OCI-LY7 (cell line): ENCODE measurements at regions of chr16 and their contacts with region 1.

Region 1: GRCh38 chr16:87702325-87702811 is 63.4 kb downstream of the KLHDC4 start:
- DNase-seq: peak; percentile 93
- H3K4me3 ChIP-seq: peak overlapping the region; percentile 36
- H3K27ac ChIP-seq: peak overlapping the region; percentile 99
- H3K4me1 ChIP-seq: peaks cover 68% of the 10 kb centered on the region
- CTCF ChIP-seq: peak; percentile 83

Region 2: GRCh38 chr16:87447323-87447722 is 255.0 kb before region 1 on chr16:
- CTCF ChIA-PET with region 1: no interaction called
- POLR2A ChIA-PET with region 1: no interaction called
- intact Hi-C with region 1: no loop called
- DNase-seq: no peak
- H3K4me3 ChIP-seq: no peak overlapping the region
- H3K27ac ChIP-seq: no peak overlapping the region
- H3K4me1 ChIP-seq: no peaks in the 10 kb centered on the region
- CTCF ChIP-seq: no peak

Region 3: DNA sequence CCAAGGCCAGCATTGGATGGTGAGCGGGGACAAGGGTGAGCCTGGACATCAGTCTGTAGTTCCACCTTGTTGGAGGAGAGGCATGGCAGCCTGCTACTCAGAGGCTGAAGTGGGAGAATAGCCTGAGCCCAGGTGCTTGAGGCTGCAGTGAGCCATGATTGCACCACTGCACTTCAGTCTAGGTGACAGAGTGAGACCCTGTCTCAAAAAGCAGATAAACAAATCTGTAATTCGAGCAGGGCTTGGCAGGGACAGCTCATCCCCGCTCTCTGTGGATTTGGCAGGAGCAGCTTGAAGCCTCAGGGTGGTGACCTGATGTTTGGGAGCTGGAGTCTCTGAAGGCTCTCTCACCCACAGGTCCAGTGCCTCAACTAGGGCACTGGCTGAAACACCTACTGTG is 170.9 kb before region 1 on chr16:
- CTCF ChIA-PET with region 1: no interaction called
- POLR2A ChIA-PET with region 1: no interaction called
- intact Hi-C with region 1: no loop called
- DNase-seq: no peak
- H3K4me3 ChIP-seq: no peak overlapping the region
- H3K27ac ChIP-seq: no peak overlapping the region
- H3K4me1 ChIP-seq: no peaks in the 10 kb centered on the region
- CTCF ChIP-seq: no peak

Region 4: GRCh38 chr16:87713451-87714229 is 11.3 kb after region 1 on chr16:
- CTCF ChIA-PET with region 1: interaction called, 10 read pairs
- POLR2A ChIA-PET with region 1: interaction called, 5 read pairs
- intact Hi-C with region 1: loop called (anchors 1 kb)
- DNase-seq: peak; percentile 91
- H3K4me3 ChIP-seq: peak overlapping the region; percentile 10
- H3K27ac ChIP-seq: peak overlapping the region; percentile 89
- H3K4me1 ChIP-seq: peaks cover 41% of the 10 kb centered on the region
- CTCF ChIP-seq: peak; percentile 38

Region 5: GRCh38 chr16:87733190-87733589 is 30.8 kb after region 1 on chr16:
- CTCF ChIA-PET with region 1: no interaction called
- POLR2A ChIA-PET with region 1: interaction called, 5 read pairs
- intact Hi-C with region 1: loop called (anchors 1 kb)
- DNase-seq: peak; percentile 88
- H3K4me3 ChIP-seq: no peak overlapping the region
- H3K27ac ChIP-seq: peak overlapping the region; percentile 71
- H3K4me1 ChIP-seq: peaks cover 56% of the 10 kb centered on the region
- CTCF ChIP-seq: no peak

Region 6: GRCh38 chr16:87778830-87779579 is 76.6 kb after region 1 on chr16:
- CTCF ChIA-PET with region 1: no interaction called
- POLR2A ChIA-PET with region 1: interaction called, 3 read pairs
- intact Hi-C with region 1: loop called (anchors 2 kb)
- DNase-seq: peak; percentile 100
- H3K4me3 ChIP-seq: peak overlapping the region; percentile 71
- H3K27ac ChIP-seq: peak overlapping the region; percentile 98
- H3K4me1 ChIP-seq: peaks cover 88% of the 10 kb centered on the region
- CTCF ChIP-seq: peak; percentile 81

Region 7: GRCh38 chr16:87877938-87878507 is 175.7 kb after region 1 on chr16:
- CTCF ChIA-PET with region 1: no interaction called
- POLR2A ChIA-PET with region 1: no interaction called
- intact Hi-C with region 1: loop called (anchors 5 kb)
- DNase-seq: peak; percentile 73
- H3K4me3 ChIP-seq: no peak overlapping the region
- H3K27ac ChIP-seq: no peak overlapping the region
- H3K4me1 ChIP-seq: peaks cover 11% of the 10 kb centered on the region
- CTCF ChIP-seq: peak; percentile 73

Region 8: GRCh38 chr16:88561485-88562369 is 859.4 kb after region 1 on chr16:
- CTCF ChIA-PET with region 1: no interaction called
- POLR2A ChIA-PET with region 1: no interaction called
- intact Hi-C with region 1: loop called (anchors 10 kb)
- DNase-seq: peak; percentile 62
- H3K4me3 ChIP-seq: no peak overlapping the region
- H3K27ac ChIP-seq: no peak overlapping the region
- H3K4me1 ChIP-seq: peaks cover 3% of the 10 kb centered on the region
- CTCF ChIP-seq: peak; percentile 67